Calu3 (cell line): ENCODE measurements at regions of chr5 and their contacts with region 1.

Region 1: DNA sequence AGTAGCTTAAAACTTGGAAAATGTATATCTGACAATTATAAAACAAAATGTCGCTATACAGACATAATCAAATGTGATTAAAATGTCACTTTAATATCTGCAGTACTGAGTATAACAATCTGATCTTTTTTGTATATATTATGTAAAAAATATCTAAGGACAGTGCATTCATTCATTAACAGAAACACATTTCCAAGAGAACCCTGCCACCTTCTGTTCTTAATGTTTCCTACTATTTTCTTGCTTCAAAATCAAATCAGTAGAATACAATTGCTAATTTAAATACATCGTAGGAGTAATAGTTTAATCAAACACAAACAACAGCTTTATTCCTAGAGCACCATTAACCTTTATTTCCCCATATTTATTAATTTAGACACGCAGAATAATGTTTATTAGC is 142.6 kb upstream of the ST8SIA4 start:
- DNase-seq: no peak
- H3K4me3 Mint-ChIP-seq: no peak overlapping the region
- H3K27ac Mint-ChIP-seq: no peak overlapping the region
- H3K4me1 Mint-ChIP-seq: peaks cover 8% of the 10 kb centered on the region
- H3K27me3 Mint-ChIP-seq: no peaks in the 10 kb centered on the region
- CTCF ChIP-seq: peak; percentile 14

Region 2: DNA sequence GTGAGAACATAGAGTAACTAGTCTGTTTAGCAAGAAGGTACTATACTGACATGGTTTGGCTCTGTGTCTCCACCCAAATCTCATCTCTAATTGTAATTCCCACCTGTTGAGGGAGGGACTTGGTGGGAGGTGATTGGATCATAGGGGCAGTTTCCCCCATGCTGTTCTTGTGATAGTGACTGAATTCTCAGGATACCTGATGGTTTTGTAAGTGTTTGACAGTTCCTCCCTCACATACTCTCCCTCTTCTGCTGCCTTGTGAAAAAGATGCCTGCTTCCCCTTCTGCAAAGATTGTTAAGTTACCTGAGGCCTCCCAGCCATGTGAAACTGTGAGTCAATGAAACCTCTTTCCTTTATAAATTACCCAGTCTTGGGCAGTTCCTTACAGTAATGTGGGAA is 97.8 kb after region 1 on chr5:
- CTCF ChIA-PET with region 1: no interaction called
- intact Hi-C with region 1: no loop called
- DNase-seq: no peak
- H3K4me3 Mint-ChIP-seq: no peak overlapping the region
- H3K27ac Mint-ChIP-seq: no peak overlapping the region
- H3K4me1 Mint-ChIP-seq: no peaks in the 10 kb centered on the region
- H3K27me3 Mint-ChIP-seq: no peaks in the 10 kb centered on the region
- CTCF ChIP-seq: no peak

Region 3: DNA sequence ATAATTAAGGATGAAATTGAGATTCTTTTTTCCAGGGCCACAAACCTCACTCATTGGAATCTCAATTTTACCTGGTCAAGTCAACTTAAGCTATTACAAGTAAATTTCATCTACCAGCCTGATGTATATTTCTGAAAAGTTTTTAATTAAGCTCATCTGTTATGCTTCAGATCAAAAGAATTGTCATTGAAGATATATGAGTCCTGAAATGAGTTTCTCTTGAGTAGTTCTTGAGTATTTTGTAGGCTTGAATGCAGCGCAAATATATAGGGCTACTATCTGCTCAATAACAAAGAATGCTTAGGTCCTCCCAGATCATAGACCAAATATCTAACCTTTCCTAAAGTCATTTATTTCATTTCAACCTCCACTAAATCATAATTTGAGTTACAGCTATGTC is 339.6 kb after region 1 on chr5:
- CTCF ChIA-PET with region 1: no interaction called
- intact Hi-C with region 1: loop called (anchors 5 kb)
- DNase-seq: no peak
- H3K4me3 Mint-ChIP-seq: no peak overlapping the region
- H3K27ac Mint-ChIP-seq: no peak overlapping the region
- H3K4me1 Mint-ChIP-seq: no peaks in the 10 kb centered on the region
- H3K27me3 Mint-ChIP-seq: no peaks in the 10 kb centered on the region
- CTCF ChIP-seq: no peak